ENCODE measurements at regions of chr6 and their contacts with region 1.

Region 1: GRCh38 chr6:30453508-30454116 is 35.7 kb upstream of the HLA-E start:
- DNase-seq: peak; percentile 85
- ATAC-seq: peak; percentile 99
- H3K4me3 ChIP-seq: no peak overlapping the region
- H3K27ac ChIP-seq: no peak overlapping the region
- H3K4me1 ChIP-seq: no peaks in the 10 kb centered on the region
- H3K27me3 ChIP-seq: peaks cover 7% of the 10 kb centered on the region; the same call in 1 of the 2 replicates
- CTCF ChIP-seq: peak; percentile 95 to 98 (median 97)
- POLR2A ChIP-seq: no peak
- RAD21 ChIP-seq: peak; percentile 90

Region 2: DNA sequence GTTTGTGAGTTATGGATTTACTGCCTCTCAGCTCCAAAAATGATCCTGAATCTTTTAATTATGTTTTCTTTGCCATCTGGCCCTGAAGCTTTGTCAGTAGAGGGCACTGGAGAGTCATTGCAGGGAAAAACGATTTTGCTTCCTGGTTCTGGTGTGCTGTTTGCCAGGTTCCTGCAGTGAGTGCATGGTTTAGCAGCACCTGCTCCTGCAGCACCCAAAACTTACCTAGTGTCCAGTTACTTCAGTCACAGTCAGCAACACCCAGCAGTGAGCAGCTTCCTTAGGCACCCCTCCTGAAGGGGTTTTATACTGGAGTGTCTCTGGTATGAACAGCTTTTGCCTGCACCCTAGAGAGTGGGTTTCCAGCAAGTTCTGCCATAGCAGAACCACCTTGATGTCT is 234.4 kb before region 1 on chr6:
- CTCF ChIA-PET with region 1: interaction called, 5 read pairs
- POLR2A ChIA-PET with region 1: no interaction called
- RAD21 ChIA-PET with region 1: no interaction called
- intact Hi-C with region 1: loop called (anchors 5 kb)
- DNase-seq: no peak
- ATAC-seq: peak; percentile 68
- H3K4me3 ChIP-seq: no peak overlapping the region
- H3K27ac ChIP-seq: no peak overlapping the region
- H3K4me1 ChIP-seq: peaks cover 0 to 8% of the 10 kb centered on the region in 2 experiments; a peak in 2 of 4 replicates
- H3K27me3 ChIP-seq: no peaks in the 10 kb centered on the region
- CTCF ChIP-seq: peak; percentile 75 to 88 (median 87); a peak in 5 of 6 replicates
- POLR2A ChIP-seq: no peak
- RAD21 ChIP-seq: peak; percentile 75

Region 3: GRCh38 chr6:30357678-30358540 is 95.7 kb before region 1 on chr6:
- CTCF ChIA-PET with region 1: interaction called, 3 read pairs
- POLR2A ChIA-PET with region 1: no interaction called
- RAD21 ChIA-PET with region 1: no interaction called
- intact Hi-C with region 1: loop called (anchors 1 kb)
- DNase-seq: peak; percentile 71
- ATAC-seq: peak; percentile 98
- H3K4me3 ChIP-seq: no peak overlapping the region
- H3K27ac ChIP-seq: no peak overlapping the region
- H3K4me1 ChIP-seq: peaks cover 0 to 6% of the 10 kb centered on the region in 2 experiments; a peak in 1 of 4 replicates
- H3K27me3 ChIP-seq: 0 out of 2 replicates have a peak, but pooled peaks cover 7% of the 10 kb centered on the region
- CTCF ChIP-seq: peak; percentile 78 to 84 (median 82)
- POLR2A ChIP-seq: no peak
- RAD21 ChIP-seq: peak; percentile 70

Region 4: GRCh38 chr6:30411515-30412207 is 42.0 kb before region 1 on chr6:
- CTCF ChIA-PET with region 1: interaction called, 12 read pairs
- POLR2A ChIA-PET with region 1: no interaction called
- RAD21 ChIA-PET with region 1: no interaction called
- intact Hi-C with region 1: loop called (anchors 1 kb)
- DNase-seq: peak; percentile 61
- ATAC-seq: peak; percentile 97
- H3K4me3 ChIP-seq: no peak overlapping the region; a peak in 1 of 4 replicates
- H3K27ac ChIP-seq: no peak overlapping the region
- H3K4me1 ChIP-seq: peaks cover 0 to 5% of the 10 kb centered on the region in 2 experiments; a peak in 1 of 4 replicates
- H3K27me3 ChIP-seq: no peaks in the 10 kb centered on the region
- CTCF ChIP-seq: peak; percentile 74 to 90 (median 76); a peak in 5 of 6 replicates
- POLR2A ChIP-seq: no peak
- RAD21 ChIP-seq: peak; percentile 67

Region 5: DNA sequence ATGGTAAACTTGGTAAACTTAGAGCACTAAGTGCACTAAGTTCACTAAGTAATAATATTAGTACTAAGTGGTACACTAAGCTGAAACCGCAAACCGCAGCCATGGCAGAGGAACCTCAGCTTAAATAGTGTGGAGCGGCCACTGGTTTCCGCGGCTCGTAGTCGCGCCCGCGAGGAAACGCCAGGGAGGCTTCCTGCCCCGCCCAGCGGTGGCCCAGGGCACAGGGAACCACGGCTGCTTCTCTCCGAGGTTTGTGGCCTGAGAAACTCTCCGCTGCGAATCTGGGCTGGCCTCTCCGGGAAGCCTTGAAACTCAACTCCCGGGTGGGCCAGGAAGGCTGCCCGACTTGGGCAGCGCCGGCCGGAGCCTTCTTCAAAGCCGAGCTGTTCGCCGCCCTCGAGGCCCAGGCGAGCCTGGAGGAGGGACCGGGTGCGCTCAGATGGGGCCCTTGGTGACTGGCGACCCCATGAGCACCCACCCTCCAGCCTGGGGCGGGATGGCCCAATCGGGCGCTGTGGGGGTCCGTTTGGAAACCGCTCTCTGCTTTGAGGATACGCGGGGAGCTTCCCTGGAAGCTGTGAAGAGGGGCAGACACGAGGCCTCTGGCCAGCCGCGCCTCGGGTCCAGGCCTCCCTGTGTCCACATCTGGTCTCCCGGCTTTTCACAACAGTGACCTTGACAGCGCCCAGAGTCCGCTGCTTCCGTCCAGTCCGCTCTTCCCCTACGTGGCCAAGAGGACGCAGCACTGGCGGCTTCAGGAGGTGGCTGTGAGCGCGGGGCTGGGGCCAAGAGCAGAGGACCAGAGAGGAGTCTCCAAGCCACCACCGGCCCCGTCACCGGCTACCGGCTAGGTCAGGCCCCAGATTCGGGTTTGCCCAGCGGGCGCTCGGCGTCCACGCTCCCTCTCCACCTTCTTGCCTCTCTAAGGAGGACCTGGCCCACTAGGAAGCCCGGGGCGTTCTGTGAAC is 10.3 kb after region 1 on chr6:
- CTCF ChIA-PET with region 1: interaction called, 11 read pairs
- POLR2A ChIA-PET with region 1: no interaction called
- RAD21 ChIA-PET with region 1: no interaction called
- intact Hi-C with region 1: no loop called
- DNase-seq: no peak
- ATAC-seq: no peak
- H3K4me3 ChIP-seq: no peak overlapping the region
- H3K27ac ChIP-seq: no peak overlapping the region
- H3K4me1 ChIP-seq: no peaks in the 10 kb centered on the region
- H3K27me3 ChIP-seq: peaks cover 8% of the 10 kb centered on the region; the same call in 1 of the 2 replicates
- CTCF ChIP-seq: no peak
- POLR2A ChIP-seq: no peak
- RAD21 ChIP-seq: no peak

Region 6: DNA sequence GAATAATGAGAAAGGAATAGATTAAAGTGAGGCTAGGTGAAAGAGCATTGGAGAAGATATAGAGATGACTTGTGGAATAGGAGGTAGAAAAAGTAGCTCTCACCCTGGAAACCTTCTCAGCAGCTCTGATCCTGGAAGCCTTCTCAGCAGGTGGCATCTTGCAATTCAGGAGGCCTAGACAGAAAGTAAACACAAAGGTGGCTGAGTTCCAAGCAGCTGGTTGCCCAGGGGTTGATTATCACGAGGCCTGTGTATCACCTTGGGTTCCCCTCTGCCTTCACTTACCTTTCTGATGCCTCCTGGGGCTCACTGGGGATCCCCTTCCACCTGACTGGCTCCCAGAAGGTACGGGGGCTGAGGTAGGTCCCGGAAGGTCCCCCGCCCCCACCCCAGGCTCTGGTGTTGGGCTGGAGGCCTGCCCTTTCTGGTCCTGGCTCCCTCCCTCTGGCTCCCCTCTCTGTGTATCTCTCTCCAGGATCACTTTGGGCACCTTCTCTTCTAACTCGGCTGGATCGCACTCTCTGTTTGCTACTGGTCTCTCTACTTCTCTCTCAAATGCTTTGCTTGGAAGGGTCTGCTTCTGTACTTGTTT is 253.8 kb after region 1 on chr6:
- CTCF ChIA-PET with region 1: no interaction called
- POLR2A ChIA-PET with region 1: no interaction called
- RAD21 ChIA-PET with region 1: no interaction called
- intact Hi-C with region 1: no loop called
- DNase-seq: no peak
- ATAC-seq: peak; percentile 25; the same call in 1 of the 2 replicates
- H3K4me3 ChIP-seq: no peak overlapping the region
- H3K27ac ChIP-seq: no peak overlapping the region
- H3K4me1 ChIP-seq: peaks cover 4 to 10% of the 10 kb centered on the region in 2 experiments; a peak in 3 of 4 replicates
- H3K27me3 ChIP-seq: no peaks in the 10 kb centered on the region
- CTCF ChIP-seq: no peak
- POLR2A ChIP-seq: no peak
- RAD21 ChIP-seq: no peak

Region 7: GRCh38 chr6:31827286-31828079 is 1373.9 kb after region 1 on chr6 and contains the start of gene HSPA1B:
- CTCF ChIA-PET with region 1: no interaction called
- POLR2A ChIA-PET with region 1: no interaction called
- RAD21 ChIA-PET with region 1: no interaction called
- intact Hi-C with region 1: no loop called
- DNase-seq: peak; percentile 100
- ATAC-seq: peak; percentile 87
- H3K4me3 ChIP-seq: peak within 1 kb of the TSS; percentile 71 to 72
- H3K27ac ChIP-seq: peak within 1 kb of the TSS; percentile 94
- H3K4me1 ChIP-seq: peaks cover 47 to 71% of the 10 kb centered on the region in 2 experiments
- H3K27me3 ChIP-seq: no peaks in the 10 kb centered on the region
- CTCF ChIP-seq: no peak
- POLR2A ChIP-seq: peak; percentile 99
- RAD21 ChIP-seq: no peak
- total RNA-seq, gene HSPA1B: 214 TPM